ENCODE measurements at regions of chr13 and their contacts with region 1.

Region 1: GRCh38 chr13:54744747-54745146 is 1716.1 kb downstream of the OLFM4 start:
- DNase-seq: no peak
- ATAC-seq: no peak
- H3K4me3 ChIP-seq: no peak overlapping the region
- H3K4me3 Mint-ChIP-seq: no peak overlapping the region
- H3K27ac ChIP-seq: no peak overlapping the region
- H3K27ac Mint-ChIP-seq: no peak overlapping the region
- H3K4me1 ChIP-seq: no peaks in the 10 kb centered on the region
- H3K4me1 Mint-ChIP-seq: no peaks in the 10 kb centered on the region
- H3K27me3 ChIP-seq: no peaks in the 10 kb centered on the region
- H3K27me3 Mint-ChIP-seq: no peaks in the 10 kb centered on the region
- CTCF ChIP-seq: no peak

Region 2: DNA sequence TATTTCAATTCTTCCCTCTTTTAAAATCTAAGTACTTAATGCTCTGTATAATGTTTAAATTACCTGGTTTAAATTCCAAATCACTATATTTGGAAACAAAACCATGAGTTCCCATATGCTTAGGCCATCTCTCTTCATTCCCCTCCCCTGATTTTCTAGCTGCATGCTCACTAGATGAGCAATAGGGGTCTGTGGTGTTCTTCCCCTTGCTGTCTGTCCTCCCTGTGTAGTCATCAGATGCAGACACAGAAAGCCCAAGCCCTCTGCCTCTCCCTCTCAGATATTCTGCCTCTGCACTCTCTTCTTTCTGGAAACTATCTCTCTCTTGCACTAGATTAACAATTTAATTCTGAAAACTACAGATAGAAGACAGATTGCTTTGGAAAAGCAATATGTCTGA is 14.0 kb after region 1 on chr13:
- CTCF ChIA-PET with region 1: no interaction called
- POLR2A ChIA-PET with region 1: no interaction called
- intact Hi-C with region 1: loop called in 1 of 2 experiments (anchors 1 kb)
- DNase-seq: no peak
- ATAC-seq: no peak
- H3K4me3 ChIP-seq: no peak overlapping the region
- H3K4me3 Mint-ChIP-seq: no peak overlapping the region
- H3K27ac ChIP-seq: no peak overlapping the region
- H3K27ac Mint-ChIP-seq: no peak overlapping the region
- H3K4me1 ChIP-seq: no peaks in the 10 kb centered on the region
- H3K4me1 Mint-ChIP-seq: no peaks in the 10 kb centered on the region
- H3K27me3 ChIP-seq: no peaks in the 10 kb centered on the region
- H3K27me3 Mint-ChIP-seq: no peaks in the 10 kb centered on the region
- CTCF ChIP-seq: no peak